ENCODE measurements at regions of chr4 and their contacts with region 1.

Region 1: GRCh38 chr4:184733654-184734524 is at the start of gene CENPU:
- DNase-seq: peak; percentile 98
- H3K4me3 Mint-ChIP-seq: peak within 1 kb of the TSS; percentile 87
- H3K27ac Mint-ChIP-seq: peak within 1 kb of the TSS; percentile 73
- H3K4me1 Mint-ChIP-seq: peaks cover 26% of the 10 kb centered on the region
- H3K27me3 Mint-ChIP-seq: no peaks in the 10 kb centered on the region
- CTCF ChIP-seq: no peak
- total RNA-seq, gene CENPU: 8.3 and 22.3 TPM in 2 replicates

Region 2: DNA sequence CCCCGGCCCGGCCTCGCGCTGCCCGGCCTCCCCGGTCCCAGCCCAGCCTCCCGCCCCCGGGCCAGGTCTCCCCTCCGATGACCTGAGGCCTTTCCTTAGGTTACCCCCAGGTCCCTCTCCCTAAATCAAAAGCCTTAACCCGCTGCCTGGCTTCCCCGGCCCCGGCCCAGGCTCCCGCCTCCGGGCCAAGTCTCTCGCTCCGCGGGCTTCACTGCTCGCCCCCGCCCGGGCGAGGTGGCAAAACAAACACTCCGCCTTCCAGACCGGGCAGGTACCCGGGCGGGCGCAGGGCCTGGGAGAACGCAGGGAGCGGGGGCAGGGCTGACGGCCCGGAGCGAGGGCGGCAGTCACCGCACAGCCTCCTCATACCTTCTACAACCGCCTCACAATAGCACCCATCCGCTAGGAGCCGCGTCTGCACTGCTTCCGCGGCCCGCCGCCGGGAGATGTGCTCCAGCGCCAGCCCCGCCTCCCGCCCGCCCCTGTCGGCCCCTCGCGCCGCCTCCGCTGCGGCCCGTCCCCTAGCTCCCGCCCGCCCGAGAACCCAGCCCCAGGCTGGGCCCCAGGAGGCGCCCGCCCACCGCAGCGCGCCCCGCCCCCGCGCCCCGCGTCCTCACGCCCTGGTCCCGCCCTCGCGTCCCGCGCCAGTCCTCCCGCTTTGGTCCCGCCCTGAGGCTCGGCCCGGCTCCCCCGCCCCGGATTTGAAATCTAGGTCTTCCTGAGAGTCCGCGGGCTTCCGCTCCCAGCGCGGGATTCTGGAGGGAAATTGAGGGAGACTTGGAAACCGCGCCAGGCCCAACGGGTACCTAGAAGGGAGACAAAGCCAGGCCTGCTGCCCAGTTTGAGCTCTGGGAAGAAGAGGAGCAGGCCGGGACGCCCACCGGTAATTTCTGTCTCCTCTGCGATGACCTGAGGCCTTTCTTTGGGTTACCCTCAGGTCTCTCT is 84.6 kb before region 1 on chr4 and contains the starts of genes CASP3 and PRIMPOL:
- CTCF ChIA-PET with region 1: interaction called, 10 read pairs
- POLR2A ChIA-PET with region 1: interaction called, 53 read pairs
- intact Hi-C with region 1: loop called (anchors 1 kb)
- DNase-seq: peak; percentile 94
- H3K4me3 Mint-ChIP-seq: peak within 1 kb of the TSS; percentile 81
- H3K27ac Mint-ChIP-seq: peak within 1 kb of the TSS; percentile 78
- H3K4me1 Mint-ChIP-seq: peaks cover 37% of the 10 kb centered on the region
- H3K27me3 Mint-ChIP-seq: no peaks in the 10 kb centered on the region
- CTCF ChIP-seq: no peak
- total RNA-seq, gene CASP3: 27.4 and 28.6 TPM in 2 replicates
- total RNA-seq, gene PRIMPOL: 19.2 and 20.7 TPM in 2 replicates

Region 3: GRCh38 chr4:184695178-184695896 is 38.6 kb before region 1 on chr4:
- CTCF ChIA-PET with region 1: no interaction called
- POLR2A ChIA-PET with region 1: interaction called, 13 read pairs
- intact Hi-C with region 1: no loop called
- DNase-seq: peak; percentile 26
- H3K4me3 Mint-ChIP-seq: no peak overlapping the region
- H3K27ac Mint-ChIP-seq: peak overlapping the region; percentile 61
- H3K4me1 Mint-ChIP-seq: peaks cover 10% of the 10 kb centered on the region
- H3K27me3 Mint-ChIP-seq: no peaks in the 10 kb centered on the region
- CTCF ChIP-seq: no peak

Region 4: GRCh38 chr4:184745831-184746795 is 12.2 kb after region 1 on chr4:
- CTCF ChIA-PET with region 1: interaction called, 10 read pairs
- POLR2A ChIA-PET with region 1: interaction called, 35 read pairs
- intact Hi-C with region 1: no loop called
- DNase-seq: peak; percentile 76
- H3K4me3 Mint-ChIP-seq: peak overlapping the region; percentile 38
- H3K27ac Mint-ChIP-seq: peak overlapping the region; percentile 84
- H3K4me1 Mint-ChIP-seq: peaks cover 26% of the 10 kb centered on the region
- H3K27me3 Mint-ChIP-seq: no peaks in the 10 kb centered on the region
- CTCF ChIP-seq: peak; percentile 57

Region 5: GRCh38 chr4:184845367-184846021 is 111.6 kb after region 1 on chr4:
- CTCF ChIA-PET with region 1: no interaction called
- POLR2A ChIA-PET with region 1: interaction called, 16 read pairs
- intact Hi-C with region 1: no loop called
- DNase-seq: peak; percentile 84
- H3K4me3 Mint-ChIP-seq: no peak overlapping the region
- H3K27ac Mint-ChIP-seq: peak overlapping the region; percentile 69
- H3K4me1 Mint-ChIP-seq: peaks cover 13% of the 10 kb centered on the region
- H3K27me3 Mint-ChIP-seq: no peaks in the 10 kb centered on the region
- CTCF ChIP-seq: no peak

Region 6: DNA sequence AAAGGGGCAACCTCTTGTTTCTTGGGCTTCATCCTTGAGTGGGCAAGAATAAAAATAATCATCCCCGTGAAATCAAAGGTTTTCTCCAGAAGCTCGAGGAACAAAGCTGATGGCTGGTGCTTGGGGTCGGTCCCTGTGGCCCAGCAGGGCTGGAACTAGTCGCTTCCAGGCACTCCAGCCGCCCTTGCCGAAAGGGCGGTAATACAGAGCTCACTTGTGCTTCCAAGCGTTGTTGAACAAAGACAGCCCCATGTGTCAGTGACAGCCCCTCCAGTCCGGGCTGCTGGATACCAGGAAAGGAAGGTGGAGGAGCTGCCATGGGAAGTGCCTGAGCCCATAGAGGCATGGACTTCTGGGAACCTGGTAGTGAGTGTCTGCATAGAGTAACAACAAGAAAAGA is 289.6 kb after region 1 on chr4:
- CTCF ChIA-PET with region 1: no interaction called
- POLR2A ChIA-PET with region 1: no interaction called
- intact Hi-C with region 1: no loop called
- DNase-seq: no peak
- H3K4me3 Mint-ChIP-seq: no peak overlapping the region
- H3K27ac Mint-ChIP-seq: no peak overlapping the region
- H3K4me1 Mint-ChIP-seq: no peaks in the 10 kb centered on the region
- H3K27me3 Mint-ChIP-seq: peaks cover 87% of the 10 kb centered on the region
- CTCF ChIP-seq: no peak

Measured in MCF 10A (cell line).